Right cardiac atrium (tissue), 5 donors: ENCODE measurements at regions of chr4 and their contacts with region 1.

Region 1: DNA sequence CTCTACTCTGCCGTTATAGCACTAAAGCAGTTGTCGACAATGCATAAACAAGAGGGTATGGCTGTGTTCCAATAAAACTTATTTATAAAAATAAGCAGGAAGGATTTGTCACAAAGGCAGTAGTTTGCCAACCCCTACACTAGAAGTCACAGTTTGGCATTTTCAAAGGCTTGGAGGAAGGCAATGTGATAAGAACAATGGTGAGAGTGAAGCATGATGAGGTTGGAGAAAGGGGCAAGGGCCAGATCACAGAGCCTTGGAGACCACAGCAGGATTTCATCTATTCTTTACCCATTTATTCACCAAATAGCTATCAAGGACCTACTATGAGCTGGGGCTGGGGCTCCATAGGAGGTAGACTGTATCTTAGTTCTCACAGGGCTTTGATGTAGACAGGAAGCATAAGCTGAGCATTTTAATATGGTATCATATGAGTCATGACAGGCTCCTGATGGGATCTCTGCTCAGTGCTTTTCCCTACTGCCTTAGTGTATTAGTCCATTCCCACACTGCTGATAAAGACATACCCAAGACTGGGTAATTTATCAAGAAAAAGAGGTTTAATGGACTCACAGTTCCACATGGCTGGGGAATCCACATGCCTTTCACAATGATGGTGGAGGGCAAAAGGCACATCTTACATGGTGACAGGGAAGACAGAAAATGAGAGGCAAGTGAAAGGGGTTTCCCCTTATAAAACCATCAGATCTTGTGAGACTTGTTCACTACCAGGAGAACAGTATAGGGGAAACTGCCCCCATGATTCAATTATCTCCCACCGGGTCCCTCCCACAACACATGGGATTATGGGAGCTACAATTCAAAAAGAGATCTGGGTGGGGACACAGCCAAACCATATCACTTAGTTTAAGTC is 58.9 kb downstream of the PPM1K start:
- DNase-seq: no peak
- ATAC-seq: peak; percentile 26 to 41
- H3K4me3 ChIP-seq: no peak overlapping the region
- H3K27ac ChIP-seq: peak overlapping the region; percentile 6
- H3K4me1 ChIP-seq: peaks cover 2% of the 10 kb centered on the region
- H3K27me3 ChIP-seq: no peaks in the 10 kb centered on the region

Region 2: GRCh38 chr4:88308587-88308986 is 83.1 kb after region 1 on chr4:
- intact Hi-C with region 1: no loop called
- DNase-seq: no peak
- ATAC-seq: no peak
- H3K4me3 ChIP-seq: no peak overlapping the region
- H3K27ac ChIP-seq: no peak overlapping the region
- H3K4me1 ChIP-seq: no peaks in the 10 kb centered on the region
- H3K27me3 ChIP-seq: no peaks in the 10 kb centered on the region

Region 3: DNA sequence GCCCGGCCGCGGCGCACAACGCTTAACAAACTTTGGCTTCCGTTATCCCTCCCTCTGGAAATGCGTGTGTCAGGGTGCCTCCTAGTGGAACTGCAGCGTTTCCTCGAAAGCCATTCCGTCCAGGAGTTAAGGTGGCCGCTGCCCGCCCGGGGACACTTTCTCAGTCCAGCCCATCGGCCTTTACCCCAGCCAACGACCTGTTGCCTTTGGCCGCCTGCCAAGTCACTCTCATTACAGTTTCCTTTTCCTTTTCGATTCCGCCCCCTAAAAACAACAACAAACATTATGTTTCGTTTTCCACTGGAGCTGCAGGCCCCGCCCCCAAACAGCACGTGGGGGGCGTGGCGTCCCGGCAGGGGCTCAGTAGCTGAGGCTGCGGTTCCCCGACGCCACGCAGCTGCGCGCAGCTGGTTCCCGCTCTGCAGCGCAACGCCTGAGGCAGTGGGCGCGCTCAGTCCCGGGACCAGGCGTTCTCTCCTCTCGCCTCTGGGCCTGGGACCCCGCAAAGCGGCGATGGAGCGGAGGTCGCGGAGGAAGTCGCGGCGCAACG is 231.4 kb after region 1 on chr4 and contains the start of gene HERC5:
- intact Hi-C with region 1: loop called in 1 of 4 experiments (anchors 10 kb)
- DNase-seq: peak; percentile 95 to 97 (median 96)
- ATAC-seq: peak; percentile 96
- H3K4me3 ChIP-seq: peak within 1 kb of the TSS; percentile 49
- H3K27ac ChIP-seq: peak within 1 kb of the TSS; percentile 26
- H3K4me1 ChIP-seq: no peaks in the 10 kb centered on the region
- H3K27me3 ChIP-seq: no peaks in the 10 kb centered on the region
- total RNA-seq, gene HERC5: 3.2 to 4.6 (median 3.8) TPM